ENCODE measurements at regions of chr7 and their contacts with region 1.

Region 1: DNA sequence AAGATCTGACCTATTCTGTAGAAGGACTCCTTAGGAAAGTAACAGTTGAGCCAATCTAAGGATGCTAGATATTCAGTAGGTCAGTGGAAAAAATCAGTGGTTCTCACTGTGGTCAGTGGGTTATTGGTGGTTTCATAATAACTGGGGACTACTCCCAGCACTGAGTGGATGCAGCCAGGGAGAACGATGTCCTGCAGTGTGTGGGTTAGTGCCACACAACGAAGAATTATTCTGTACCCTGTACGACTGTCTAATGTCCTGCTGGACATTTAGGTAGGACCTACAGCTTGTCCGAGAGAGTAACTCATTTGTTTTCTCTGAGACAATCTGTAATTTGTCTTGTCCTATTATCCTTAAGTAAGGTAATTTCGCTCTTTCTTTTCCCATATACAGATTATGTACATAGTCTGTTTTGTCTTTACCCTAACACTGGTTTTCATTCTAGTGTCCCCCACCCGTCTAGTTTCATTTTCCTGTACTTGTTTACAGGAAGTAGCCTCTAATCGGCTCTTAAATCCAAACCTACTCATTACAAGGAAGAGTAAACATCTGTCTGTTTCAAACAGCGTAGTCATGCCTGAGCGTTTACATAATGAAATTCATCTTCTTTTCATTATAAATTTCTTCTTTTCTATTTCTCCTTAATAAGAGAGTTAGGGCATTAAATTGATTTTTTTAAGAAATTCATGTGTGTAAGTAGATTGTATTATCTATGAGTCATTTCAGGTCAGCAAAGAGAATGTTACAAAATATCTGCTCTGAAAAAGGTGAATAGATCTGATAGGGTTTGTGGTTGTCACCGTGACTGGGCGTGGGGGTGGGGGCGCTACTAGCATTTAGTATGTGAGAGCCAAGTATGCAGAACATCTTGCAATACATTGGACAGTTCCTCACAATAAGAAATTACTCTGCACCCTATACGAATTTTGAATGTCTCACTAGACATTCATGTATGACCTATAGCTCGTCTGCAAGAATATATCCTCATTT is 8.3 kb upstream of the ZC3HAV1L start:
- DNase-seq: peak; percentile 84
- H3K4me3 Mint-ChIP-seq: no peak overlapping the region
- H3K27ac Mint-ChIP-seq: peak overlapping the region; percentile 62
- H3K4me1 Mint-ChIP-seq: peaks cover 63% of the 10 kb centered on the region
- H3K27me3 Mint-ChIP-seq: no peaks in the 10 kb centered on the region

Region 2: DNA sequence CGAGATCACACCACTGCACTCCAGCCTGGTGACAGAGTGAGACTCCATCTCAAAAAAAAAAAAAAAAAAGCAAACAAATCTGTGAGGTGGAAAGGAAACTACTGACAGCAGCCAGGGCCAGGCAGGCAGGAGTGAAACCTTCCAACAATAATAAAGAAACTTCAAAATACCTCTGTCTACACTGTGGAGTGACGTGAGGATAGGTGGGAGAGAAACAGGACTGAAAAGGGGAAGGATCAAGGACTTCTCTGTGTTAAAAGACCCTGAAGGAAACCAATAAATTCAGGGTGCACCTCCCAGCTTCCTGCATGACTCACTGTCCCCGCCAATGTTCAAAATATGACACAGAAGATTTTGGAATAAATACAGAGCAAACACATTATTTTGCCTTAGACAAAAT is 145.9 kb before region 1 on chr7:
- CTCF ChIA-PET with region 1: no interaction called
- POLR2A ChIA-PET with region 1: no interaction called
- intact Hi-C with region 1: loop called (anchors 5 kb)
- DNase-seq: peak; percentile 45
- H3K4me3 Mint-ChIP-seq: peak overlapping the region; percentile 21
- H3K27ac Mint-ChIP-seq: peak overlapping the region; percentile 70
- H3K4me1 Mint-ChIP-seq: peaks cover 30% of the 10 kb centered on the region
- H3K27me3 Mint-ChIP-seq: peaks cover 15% of the 10 kb centered on the region

Region 3: DNA sequence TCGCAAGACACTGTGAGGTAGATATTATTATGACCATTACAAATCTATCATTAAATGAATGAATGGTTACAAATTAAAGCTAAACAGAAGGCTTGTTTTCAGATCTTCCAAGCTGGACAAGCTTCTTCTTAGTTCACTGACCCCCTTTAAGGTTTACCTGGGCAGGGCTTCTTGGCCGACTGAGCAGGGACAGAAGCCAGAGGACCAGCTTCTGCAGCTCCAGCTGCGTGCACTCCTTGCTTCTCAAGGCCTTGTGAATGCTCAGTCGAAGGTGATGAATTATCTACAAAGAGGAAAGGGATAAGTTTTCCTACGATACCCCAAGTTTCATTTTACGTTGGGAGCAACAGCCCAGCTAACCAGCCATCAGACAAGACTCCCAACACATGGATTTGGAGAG is 17.6 kb before region 1 on chr7:
- CTCF ChIA-PET with region 1: no interaction called
- POLR2A ChIA-PET with region 1: no interaction called
- intact Hi-C with region 1: no loop called
- DNase-seq: no peak
- H3K4me3 Mint-ChIP-seq: no peak overlapping the region
- H3K27ac Mint-ChIP-seq: no peak overlapping the region
- H3K4me1 Mint-ChIP-seq: no peaks in the 10 kb centered on the region
- H3K27me3 Mint-ChIP-seq: no peaks in the 10 kb centered on the region

Region 4: DNA sequence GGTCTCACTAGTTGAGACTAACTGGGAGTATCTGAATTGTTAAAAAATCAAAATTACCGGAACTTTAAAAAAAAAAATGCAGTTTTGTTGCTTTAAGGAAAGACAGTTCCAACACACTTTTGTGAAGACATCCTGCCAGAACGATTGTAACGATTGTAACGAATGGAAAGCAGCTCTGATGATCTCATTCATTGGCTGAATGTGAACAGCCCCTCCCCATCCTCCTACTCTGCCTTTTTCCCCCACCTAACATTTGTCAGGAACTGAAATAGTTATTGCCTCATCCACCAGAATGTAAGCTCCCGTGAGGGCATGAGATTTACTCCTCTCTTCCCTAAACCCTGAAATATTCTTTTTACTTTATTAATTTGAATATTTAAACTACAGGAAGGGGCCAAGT is 14.8 kb after region 1 on chr7:
- CTCF ChIA-PET with region 1: no interaction called
- POLR2A ChIA-PET with region 1: interaction called, 7 read pairs
- intact Hi-C with region 1: loop called (anchors 2 kb)
- DNase-seq: peak; percentile 0
- H3K4me3 Mint-ChIP-seq: no peak overlapping the region
- H3K27ac Mint-ChIP-seq: peak overlapping the region; percentile 69
- H3K4me1 Mint-ChIP-seq: peaks cover 78% of the 10 kb centered on the region
- H3K27me3 Mint-ChIP-seq: no peaks in the 10 kb centered on the region

Region 5: DNA sequence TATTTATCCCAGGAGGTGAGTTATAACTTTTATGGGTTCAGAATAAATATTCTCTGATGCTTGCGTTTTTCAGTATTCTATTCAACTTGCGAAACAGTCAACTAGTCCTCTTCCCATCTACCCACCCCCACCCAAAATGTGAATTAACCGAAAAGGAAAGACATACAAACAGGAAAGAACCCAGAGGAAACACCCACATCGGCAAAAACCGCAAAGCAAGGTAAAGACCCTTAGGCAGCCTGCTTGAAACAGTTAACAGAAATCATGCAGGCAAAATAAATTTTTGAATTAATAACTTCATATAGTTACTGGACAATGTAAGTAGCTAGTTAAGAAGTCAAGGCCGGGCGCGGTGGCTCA is 60.0 kb after region 1 on chr7:
- CTCF ChIA-PET with region 1: no interaction called
- POLR2A ChIA-PET with region 1: no interaction called
- intact Hi-C with region 1: loop called (anchors 2 kb)
- DNase-seq: peak; percentile 70
- H3K4me3 Mint-ChIP-seq: peak overlapping the region; percentile 86
- H3K27ac Mint-ChIP-seq: peak overlapping the region; percentile 97
- H3K4me1 Mint-ChIP-seq: peaks cover 32% of the 10 kb centered on the region
- H3K27me3 Mint-ChIP-seq: no peaks in the 10 kb centered on the region